PC-3 (cell line): ENCODE measurements at regions of chr18 and their contacts with region 1.

Region 1: GRCh38 chr18:27845897-27846296 is 331.0 kb downstream of the CDH2 start:
- DNase-seq: no peak
- ATAC-seq: no peak
- H3K4me3 ChIP-seq: no peak overlapping the region
- H3K27ac ChIP-seq: no peak overlapping the region
- H3K4me1 ChIP-seq: peaks cover 52% of the 10 kb centered on the region
- H3K27me3 ChIP-seq: no peaks in the 10 kb centered on the region
- CTCF ChIP-seq: no peak

Region 2: GRCh38 chr18:27769152-27769551 is 76.7 kb before region 1 on chr18:
- CTCF ChIA-PET with region 1: no interaction called
- POLR2A ChIA-PET with region 1: no interaction called
- intact Hi-C with region 1: no loop called
- DNase-seq: peak; percentile 12
- ATAC-seq: no peak; the same call in 1 of the 2 replicates
- H3K4me3 ChIP-seq: no peak overlapping the region
- H3K27ac ChIP-seq: no peak overlapping the region
- H3K4me1 ChIP-seq: no peaks in the 10 kb centered on the region
- H3K27me3 ChIP-seq: no peaks in the 10 kb centered on the region
- CTCF ChIP-seq: no peak

Region 3: GRCh38 chr18:27871726-27872125 is 25.8 kb after region 1 on chr18:
- CTCF ChIA-PET with region 1: no interaction called
- POLR2A ChIA-PET with region 1: no interaction called
- intact Hi-C with region 1: loop called (anchors 1 kb)
- DNase-seq: no peak
- ATAC-seq: no peak
- H3K4me3 ChIP-seq: no peak overlapping the region
- H3K27ac ChIP-seq: no peak overlapping the region
- H3K4me1 ChIP-seq: no peaks in the 10 kb centered on the region
- H3K27me3 ChIP-seq: no peaks in the 10 kb centered on the region
- CTCF ChIP-seq: no peak

Region 4: DNA sequence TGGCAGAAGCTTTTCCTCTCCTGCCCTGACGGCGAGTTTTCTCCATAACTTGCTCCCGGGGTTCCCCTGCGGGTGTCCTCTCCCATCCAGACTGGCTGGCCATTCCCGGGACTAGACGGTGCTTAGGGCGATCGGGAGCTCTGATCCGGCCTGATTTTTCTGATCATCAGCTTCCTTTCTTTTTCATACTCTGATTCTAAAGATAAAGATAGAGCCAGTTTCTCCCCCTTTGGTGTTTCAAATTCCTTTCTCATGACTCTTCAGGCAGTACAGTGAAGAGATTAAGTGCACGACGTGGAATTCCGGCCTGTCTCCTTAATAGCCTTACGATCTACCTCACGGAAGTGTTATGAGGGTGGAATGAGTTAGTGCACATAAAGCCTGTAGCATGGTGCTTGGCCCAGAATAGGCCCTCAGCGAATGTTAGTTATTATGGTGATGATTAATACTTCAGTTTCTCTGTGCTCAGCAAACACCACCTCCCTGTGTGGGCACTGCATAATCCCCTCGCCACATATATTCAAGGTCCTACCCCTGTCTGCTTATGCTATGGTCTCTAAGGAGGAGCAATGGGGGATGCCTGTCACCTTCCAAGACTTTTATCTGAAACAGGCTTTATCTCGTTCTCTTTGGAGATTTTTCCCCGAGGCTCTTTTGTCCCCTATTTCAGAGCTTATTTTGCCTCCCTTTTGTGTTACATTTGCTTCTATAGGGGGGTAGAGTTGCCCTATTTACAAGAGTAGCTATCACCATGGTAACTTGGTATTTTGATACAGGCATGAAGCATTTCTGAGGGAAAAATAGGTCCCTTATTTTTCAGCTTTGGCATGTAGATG is 76.2 kb after region 1 on chr18:
- CTCF ChIA-PET with region 1: interaction called, 9 read pairs
- POLR2A ChIA-PET with region 1: no interaction called
- intact Hi-C with region 1: loop called (anchors 5 kb)
- DNase-seq: peak; percentile 94
- ATAC-seq: peak; percentile 100
- H3K4me3 ChIP-seq: peak overlapping the region; percentile 66
- H3K27ac ChIP-seq: peak overlapping the region; percentile 83
- H3K4me1 ChIP-seq: peaks cover 25% of the 10 kb centered on the region
- H3K27me3 ChIP-seq: no peaks in the 10 kb centered on the region
- CTCF ChIP-seq: no peak

Region 5: GRCh38 chr18:28019425-28020108 is 173.7 kb after region 1 on chr18:
- CTCF ChIA-PET with region 1: no interaction called
- POLR2A ChIA-PET with region 1: no interaction called
- intact Hi-C with region 1: loop called (anchors 1 kb)
- DNase-seq: peak; percentile 87
- ATAC-seq: peak; percentile 96
- H3K4me3 ChIP-seq: no peak overlapping the region
- H3K27ac ChIP-seq: no peak overlapping the region
- H3K4me1 ChIP-seq: peaks cover 25% of the 10 kb centered on the region
- H3K27me3 ChIP-seq: no peaks in the 10 kb centered on the region
- CTCF ChIP-seq: no peak